ENCODE measurements at regions of chr4 and their contacts with region 1.

Region 1: GRCh38 chr4:71009890-71010588 is 16.6 kb downstream of the DCK start:
- DNase-seq: peak; percentile 66
- H3K4me3 ChIP-seq: no peak overlapping the region
- H3K27ac ChIP-seq: peak overlapping the region; percentile 44
- H3K4me1 ChIP-seq: peaks cover 50% of the 10 kb centered on the region
- CTCF ChIP-seq: peak; percentile 96

Region 2: DNA sequence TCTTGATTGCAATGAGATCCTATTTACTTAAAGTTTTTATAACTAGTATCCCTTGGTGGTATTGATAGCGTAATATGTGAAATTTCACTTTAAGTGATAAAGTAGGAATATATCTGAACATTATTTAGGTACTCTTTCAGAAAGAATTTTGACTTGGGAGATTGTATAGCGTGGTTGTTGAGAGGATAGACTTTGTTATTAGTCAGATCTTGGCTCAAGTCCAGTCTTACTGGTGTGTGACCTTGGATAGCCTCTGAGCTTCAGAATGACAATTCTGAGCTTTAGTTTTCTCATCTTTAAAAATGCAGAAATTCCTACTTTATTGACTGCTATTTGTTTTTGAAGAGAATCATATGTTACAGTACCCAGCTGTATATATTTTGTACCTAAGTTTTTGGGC is 16.0 kb after region 1 on chr4:
- CTCF ChIA-PET with region 1: no interaction called
- POLR2A ChIA-PET with region 1: interaction called, 13 read pairs
- intact Hi-C with region 1: no loop called
- DNase-seq: no peak
- H3K4me3 ChIP-seq: no peak overlapping the region
- H3K27ac ChIP-seq: no peak overlapping the region
- H3K4me1 ChIP-seq: no peaks in the 10 kb centered on the region
- CTCF ChIP-seq: no peak